ENCODE measurements at regions of chr16 and their contacts with region 1.

Region 1: DNA sequence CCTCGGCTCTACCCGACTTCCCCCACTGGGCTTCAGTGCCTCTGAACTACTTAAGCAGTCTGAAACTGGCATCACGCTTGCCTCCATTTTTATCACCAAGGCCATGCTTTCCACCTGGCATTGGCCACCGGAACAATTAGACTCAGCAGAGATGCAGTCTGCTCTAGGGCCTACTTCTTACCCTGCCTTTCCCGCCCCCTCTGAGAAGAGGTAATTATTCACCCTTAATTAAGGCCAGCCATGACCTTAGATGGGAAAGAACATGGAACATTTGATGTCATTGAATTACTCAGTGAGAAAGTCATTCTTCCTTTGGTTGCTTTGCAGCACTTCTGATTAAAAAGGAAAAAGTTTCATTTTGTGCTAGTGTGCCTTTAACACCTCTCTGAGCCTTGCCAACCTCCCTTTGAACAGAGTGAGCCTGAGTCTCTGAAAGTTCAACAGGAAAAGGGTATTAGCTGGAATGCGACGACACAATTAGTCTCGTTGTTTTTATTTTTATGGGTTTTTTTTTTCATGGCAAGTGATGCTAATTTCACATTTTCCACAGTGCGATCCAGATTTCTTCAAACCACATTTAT is 60.9 kb upstream of the TNRC6A start:
- DNase-seq: peak; percentile 83
- H3K4me3 Mint-ChIP-seq: peak overlapping the region; percentile 37
- H3K27ac Mint-ChIP-seq: peak overlapping the region; percentile 94
- H3K4me1 Mint-ChIP-seq: peaks cover 56% of the 10 kb centered on the region
- H3K27me3 Mint-ChIP-seq: peaks cover 13% of the 10 kb centered on the region

Region 2: DNA sequence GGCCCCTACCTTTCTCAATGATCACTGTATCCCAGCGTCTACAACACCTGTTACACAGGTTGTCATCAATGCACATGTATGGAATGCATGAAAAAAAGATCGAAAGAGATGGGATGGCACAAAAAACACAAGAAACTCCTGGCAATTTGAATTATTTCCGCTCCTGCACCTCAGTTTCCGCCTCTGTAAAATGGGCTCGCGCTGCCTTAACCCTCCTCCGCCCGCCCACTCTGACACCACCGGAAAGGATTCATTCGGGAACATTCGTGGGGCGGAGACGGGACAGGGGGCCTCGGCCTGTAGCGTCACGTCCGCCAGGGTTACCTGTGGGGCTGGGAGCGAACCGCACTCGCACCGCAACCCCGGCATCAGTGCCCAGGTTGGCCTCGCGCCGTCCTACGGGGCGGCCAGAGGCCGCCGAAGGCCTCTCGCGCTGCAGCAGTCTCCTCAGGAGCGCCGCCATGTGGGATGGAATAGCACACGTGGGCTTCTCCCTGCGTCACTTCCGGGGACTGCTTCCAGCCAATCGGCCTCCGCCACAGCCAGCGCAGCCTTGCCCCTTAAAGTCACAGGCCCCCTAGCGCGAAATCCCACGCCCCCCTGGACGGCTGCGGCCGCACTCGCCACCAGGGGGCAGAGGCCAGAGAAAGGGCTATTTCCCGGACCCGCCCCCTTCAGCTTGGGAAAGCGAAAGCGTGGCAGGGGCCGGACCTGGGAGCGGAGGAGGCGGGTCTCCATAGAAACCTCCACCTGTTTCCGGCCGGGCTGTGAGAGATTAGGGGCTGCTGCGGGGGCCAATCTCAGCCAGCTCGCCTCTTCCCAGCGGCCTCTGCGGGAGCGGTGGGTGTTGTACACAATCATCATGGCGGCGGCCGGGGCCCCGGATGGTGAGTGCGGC is 1111.4 kb before region 1 on chr16 and contains the starts of genes EARS2 and UBFD1:
- CTCF ChIA-PET with region 1: no interaction called
- intact Hi-C with region 1: loop called (anchors 10 kb)
- DNase-seq: peak; percentile 97
- H3K4me3 Mint-ChIP-seq: peak within 1 kb of the TSS; percentile 89
- H3K27ac Mint-ChIP-seq: peak within 1 kb of the TSS; percentile 85
- H3K4me1 Mint-ChIP-seq: peaks cover 47% of the 10 kb centered on the region
- H3K27me3 Mint-ChIP-seq: no peaks in the 10 kb centered on the region
- total RNA-seq, gene EARS2: 23.7 to 25.1 TPM
- total RNA-seq, gene UBFD1: 52.3 to 54.6 TPM

Region 3: DNA sequence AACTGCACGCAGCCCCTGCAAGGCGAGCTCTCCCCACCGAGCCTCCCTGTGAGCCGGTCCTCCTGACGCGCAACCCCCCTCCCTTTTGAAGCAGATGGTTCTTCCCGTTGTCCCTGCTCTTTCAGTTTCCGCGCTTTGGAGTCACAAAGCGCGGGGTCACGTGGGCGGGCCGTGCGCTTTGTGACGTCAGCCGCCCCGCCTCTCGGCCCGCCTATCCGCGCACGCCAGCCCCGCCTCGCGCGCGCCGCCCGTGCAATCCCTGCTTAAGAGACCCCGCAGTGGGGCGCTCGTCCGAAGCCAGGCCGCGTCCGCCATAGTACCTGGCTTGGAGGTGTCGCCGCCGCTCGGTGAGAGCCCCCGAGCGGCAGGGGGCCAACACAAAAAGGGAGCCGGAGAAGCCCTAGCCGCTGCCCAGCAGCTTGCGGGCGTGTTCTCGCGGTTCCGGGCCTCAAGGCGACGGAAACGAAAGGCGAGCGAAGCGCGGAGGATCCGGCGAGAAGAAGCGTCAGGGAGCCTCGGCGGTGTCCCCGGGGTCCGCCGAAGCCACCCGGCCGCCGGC is 129.2 kb before region 1 on chr16 and contains the start of gene RBBP6:
- CTCF ChIA-PET with region 1: no interaction called
- intact Hi-C with region 1: loop called (anchors 1 kb)
- DNase-seq: peak; percentile 92
- H3K4me3 Mint-ChIP-seq: peak within 1 kb of the TSS; percentile 99
- H3K27ac Mint-ChIP-seq: peak within 1 kb of the TSS; percentile 100
- H3K4me1 Mint-ChIP-seq: peaks cover 27% of the 10 kb centered on the region
- H3K27me3 Mint-ChIP-seq: no peaks in the 10 kb centered on the region
- total RNA-seq, gene RBBP6: 64.4 to 65.0 TPM

Region 4: GRCh38 chr16:24748242-24748641 is 79.7 kb after region 1 on chr16:
- CTCF ChIA-PET with region 1: no interaction called
- intact Hi-C with region 1: loop called (anchors 1 kb)
- DNase-seq: peak; percentile 66
- H3K4me3 Mint-ChIP-seq: no peak overlapping the region
- H3K27ac Mint-ChIP-seq: peak overlapping the region; percentile 40
- H3K4me1 Mint-ChIP-seq: peaks cover 80% of the 10 kb centered on the region
- H3K27me3 Mint-ChIP-seq: no peaks in the 10 kb centered on the region

Region 5: GRCh38 chr16:25014500-25015147 is 346.1 kb after region 1 on chr16:
- CTCF ChIA-PET with region 1: no interaction called
- intact Hi-C with region 1: loop called (anchors 5 kb)
- DNase-seq: peak; percentile 47
- H3K4me3 Mint-ChIP-seq: peak overlapping the region; percentile 89
- H3K27ac Mint-ChIP-seq: peak overlapping the region; percentile 88
- H3K4me1 Mint-ChIP-seq: peaks cover 79% of the 10 kb centered on the region
- H3K27me3 Mint-ChIP-seq: no peaks in the 10 kb centered on the region

Region 6: DNA sequence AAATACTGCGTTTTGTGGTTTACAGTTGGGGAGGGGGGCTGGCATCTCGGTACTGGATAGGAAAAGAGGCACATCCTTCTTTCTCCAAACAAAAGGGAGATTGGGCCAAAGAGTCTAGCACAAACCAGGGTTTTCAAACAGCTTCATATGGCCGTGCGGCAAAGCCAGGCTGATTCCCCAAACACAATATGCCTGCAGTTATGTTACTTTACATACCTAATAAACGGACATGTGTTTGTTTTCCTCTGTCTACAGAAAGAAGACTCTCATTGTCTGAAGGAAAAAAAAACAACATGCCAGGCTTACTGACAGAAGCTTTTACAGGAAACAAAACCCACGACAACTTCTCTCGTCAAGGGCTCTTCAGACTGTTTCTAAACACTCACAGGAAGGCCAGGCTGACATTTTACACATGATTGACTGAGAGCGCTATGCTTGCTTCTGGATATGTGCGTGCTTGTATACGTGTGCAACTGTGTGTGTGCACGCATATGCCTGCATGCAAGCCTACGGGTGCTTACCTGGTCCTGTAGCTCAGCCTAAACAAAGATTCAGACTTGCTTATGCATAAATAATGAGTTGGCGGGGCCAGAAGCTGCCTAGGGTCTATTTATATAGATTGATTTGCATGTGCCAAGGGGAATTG is 1937.2 kb after region 1 on chr16:
- CTCF ChIA-PET with region 1: no interaction called
- intact Hi-C with region 1: loop called (anchors 10 kb)
- DNase-seq: no peak
- H3K4me3 Mint-ChIP-seq: no peak overlapping the region
- H3K27ac Mint-ChIP-seq: no peak overlapping the region
- H3K4me1 Mint-ChIP-seq: peaks cover 31% of the 10 kb centered on the region
- H3K27me3 Mint-ChIP-seq: peaks cover 14% of the 10 kb centered on the region